ENCODE measurements at regions of chr11 and their contacts with region 1.

Region 1: GRCh38 chr11:91041626-91042025 is 818.8 kb upstream of the CHORDC1 start:
- DNase-seq: no peak

Region 2: GRCh38 chr11:91248199-91248807 is 206.7 kb after region 1 on chr11:
- intact Hi-C with region 1: loop called (anchors 10 kb)
- DNase-seq: no peak